Psoas muscle (tissue), 8 donors: ENCODE measurements at regions of chr16 and their contacts with region 1.

Region 1: GRCh38 chr16:13463619-13464018 is 456.3 kb upstream of the ERCC4 start:
- DNase-seq: no peak
- ATAC-seq: no peak
- H3K4me3 ChIP-seq: no peak overlapping the region
- H3K27ac ChIP-seq: no peak overlapping the region
- H3K4me1 ChIP-seq: no peaks in the 10 kb centered on the region
- H3K27me3 ChIP-seq: no peaks in the 10 kb centered on the region
- CTCF ChIP-seq: no peak

Region 2: DNA sequence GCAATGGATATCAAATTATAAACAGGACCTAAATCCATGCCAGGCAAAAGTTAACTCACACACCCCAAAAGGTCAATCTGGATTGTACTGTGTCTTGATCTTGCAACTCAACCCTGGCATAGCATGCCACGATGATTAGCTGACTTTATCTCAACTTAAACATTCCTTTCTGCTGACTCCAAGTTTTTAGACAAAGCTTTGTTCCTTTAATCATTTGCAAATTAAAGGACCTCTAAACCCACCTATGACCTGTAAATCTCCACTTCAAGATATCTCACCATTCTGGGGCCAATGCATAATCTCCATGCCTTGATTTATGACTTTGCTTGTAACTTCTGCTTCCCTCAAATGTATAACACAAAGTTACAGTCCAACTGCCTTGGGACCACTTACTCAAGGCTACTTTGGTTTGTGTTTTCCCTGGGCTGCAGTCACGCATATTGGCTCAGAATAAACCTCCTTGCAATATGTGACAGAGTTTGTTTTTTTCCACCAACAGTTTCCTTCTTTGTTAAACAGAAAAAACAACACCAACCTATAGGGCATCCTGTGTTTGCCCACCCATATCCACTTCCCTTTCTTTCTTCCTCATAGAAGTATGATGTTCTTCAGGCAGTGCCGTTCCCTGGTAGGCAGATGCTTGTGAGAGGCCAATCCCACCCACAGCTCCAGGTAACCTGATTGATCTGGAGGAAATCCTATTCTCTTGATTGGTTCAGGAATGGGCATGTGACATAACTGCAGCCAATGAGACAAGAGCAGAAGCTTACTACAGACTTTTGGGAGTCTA is 65.8 kb after region 1 on chr16:
- intact Hi-C with region 1: loop called in 1 of 2 experiments (anchors 10 kb)
- DNase-seq: no peak
- ATAC-seq: no peak
- H3K4me3 ChIP-seq: no peak overlapping the region
- H3K27ac ChIP-seq: no peak overlapping the region
- H3K4me1 ChIP-seq: no peaks in the 10 kb centered on the region
- H3K27me3 ChIP-seq: no peaks in the 10 kb centered on the region
- CTCF ChIP-seq: no peak